GM12878 (cell line): ENCODE measurements at regions of chr4 and their contacts with region 1.

Region 1: DNA sequence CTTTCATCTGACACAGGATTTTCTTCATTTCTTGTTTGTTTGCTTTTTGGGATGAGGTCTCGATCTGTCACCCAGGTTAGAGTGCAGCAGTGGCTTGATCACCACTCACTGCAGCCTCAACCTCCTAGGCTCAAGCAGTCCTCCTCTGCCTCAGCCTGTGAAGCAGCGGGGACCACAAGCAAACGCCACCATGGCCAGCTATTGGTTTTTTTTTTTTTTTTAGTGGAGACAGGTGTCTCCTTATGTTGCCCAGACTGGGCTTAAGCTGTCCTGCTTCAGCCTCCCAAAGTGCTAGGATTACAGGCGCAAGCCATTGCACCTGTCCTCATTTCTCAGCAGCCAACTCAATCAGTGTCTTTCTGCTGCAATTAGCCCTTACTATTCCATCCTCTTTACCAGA is 10.3 kb downstream of the SPRY1 start:
- DNase-seq: no peak
- ATAC-seq: no peak
- H3K4me3 ChIP-seq: no peak overlapping the region
- H3K27ac ChIP-seq: no peak overlapping the region
- H3K4me1 ChIP-seq: peaks cover 7% of the 10 kb centered on the region
- H3K27me3 ChIP-seq: no peaks in the 10 kb centered on the region
- CTCF ChIP-seq: no peak
- EP300 ChIP-seq: no peak
- POLR2A ChIP-seq: no peak
- RAD21 ChIP-seq: no peak

Region 2: DNA sequence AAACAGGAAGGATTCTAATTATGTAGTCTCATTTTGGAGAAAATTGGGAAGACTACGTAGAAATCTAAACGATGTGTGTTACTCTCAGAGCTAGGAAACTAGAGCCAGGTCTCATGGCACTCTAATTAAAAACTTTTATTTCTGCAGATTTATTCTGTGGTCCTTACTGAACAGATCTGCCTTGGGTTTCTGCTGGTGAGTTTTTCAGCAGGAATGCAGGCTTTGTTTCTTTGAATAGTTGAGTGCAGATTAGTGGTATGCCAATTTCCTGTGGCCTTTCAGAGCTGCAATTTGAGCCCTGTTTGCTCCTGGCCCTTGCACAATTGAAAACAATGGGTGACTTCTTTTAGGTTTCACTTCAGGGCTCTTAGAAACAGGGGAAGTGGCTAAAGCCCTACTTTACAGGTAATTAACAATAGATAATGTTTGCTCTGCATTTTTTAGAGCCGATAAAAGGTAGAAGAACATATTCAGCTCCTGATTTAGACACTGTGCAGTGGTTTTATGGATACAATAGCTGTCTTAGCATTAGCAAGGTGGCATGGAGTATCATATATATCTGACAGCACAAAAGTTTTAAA is 11.6 kb after region 1 on chr4:
- CTCF ChIA-PET with region 1: interaction called, 14 read pairs
- POLR2A ChIA-PET with region 1: interaction called, 3 read pairs
- RAD21 ChIA-PET with region 1: interaction called, 4 read pairs
- SMC1A ChIA-PET with region 1: interaction called, 18 read pairs
- in situ Hi-C with region 1: no loop called
- intact Hi-C with region 1: no loop called
- DNase-seq: no peak
- ATAC-seq: peak; percentile 93
- H3K4me3 ChIP-seq: no peak overlapping the region
- H3K27ac ChIP-seq: no peak overlapping the region
- H3K4me1 ChIP-seq: peaks cover 9% of the 10 kb centered on the region; the same call in 1 of the 2 replicates
- H3K27me3 ChIP-seq: no peaks in the 10 kb centered on the region
- CTCF ChIP-seq: no peak
- EP300 ChIP-seq: no peak; a peak in 1 of 4 replicates
- POLR2A ChIP-seq: no peak
- RAD21 ChIP-seq: no peak